Pancreas (tissue), 10 donors: ENCODE measurements at regions of chr7 and their contacts with region 1.

Region 1: DNA sequence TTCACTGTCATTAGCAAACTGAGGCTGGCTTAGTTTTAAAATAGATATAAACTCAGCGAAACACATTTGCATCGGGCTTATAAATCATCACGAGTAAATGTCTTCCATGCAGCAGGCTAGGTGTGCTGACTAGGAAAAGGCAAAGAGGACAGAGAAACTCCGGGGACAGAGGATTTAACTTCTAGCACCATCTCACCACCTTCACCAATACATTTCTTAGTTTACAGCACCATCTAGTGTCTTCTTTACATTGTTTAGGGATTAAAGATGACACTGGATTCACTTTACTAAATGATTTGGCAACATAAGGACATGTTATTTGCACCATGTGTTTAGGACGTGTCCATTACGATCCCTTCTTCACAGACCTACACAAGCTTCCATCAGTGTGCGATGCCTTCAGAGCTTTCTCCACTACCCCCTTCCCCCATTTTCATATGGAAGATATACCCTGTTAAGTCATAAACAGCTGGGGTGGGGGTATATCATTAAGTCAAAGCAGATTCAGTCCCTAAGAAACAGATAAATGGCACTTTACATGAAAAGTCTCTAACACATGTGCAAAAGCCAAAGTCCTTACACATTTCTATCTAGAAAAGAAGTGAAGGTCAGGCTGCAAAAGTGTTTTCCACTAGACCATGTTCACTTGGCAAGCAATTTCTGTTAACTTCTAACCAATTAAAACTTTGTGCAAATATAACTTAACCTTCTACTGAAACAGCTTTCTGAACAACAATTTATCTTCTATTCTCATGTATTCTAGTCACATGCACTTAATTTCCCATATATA is 103.3 kb downstream of the GRB10 start:
- DNase-seq: no peak
- ATAC-seq: peak; percentile 15 to 43 (median 39)
- H3K4me3 ChIP-seq: no peak overlapping the region
- H3K27ac ChIP-seq: peak overlapping the region in 3 of 4 donors; percentile 8 to 60 (median 53)
- H3K4me1 ChIP-seq: peaks cover 42 to 81% (median 56%) of the 10 kb centered on the region in 3 donors
- H3K27me3 ChIP-seq: no peaks in the 10 kb centered on the region
- CTCF ChIP-seq: peak in 1 of 4 donors; percentile 10

Region 2: GRCh38 chr7:50101873-50102272 is 577.5 kb before region 1 on chr7:
- intact Hi-C with region 1: no loop called
- DNase-seq: no peak
- ATAC-seq: no peak
- H3K4me3 ChIP-seq: no peak overlapping the region
- H3K27ac ChIP-seq: no peak overlapping the region
- H3K4me1 ChIP-seq: no peaks in the 10 kb centered on the region
- H3K27me3 ChIP-seq: peaks cover 0 to 20% (median 0%) of the 10 kb centered on the region in 4 donors
- CTCF ChIP-seq: no peak

Region 3: GRCh38 chr7:50793115-50793946 is 113.9 kb after region 1 on chr7:
- intact Hi-C with region 1: loop called in 1 of 3 experiments (anchors 10 kb)
- DNase-seq: peak; percentile 77 to 90 (median 85)
- ATAC-seq: peak; percentile 71 to 82 (median 78)
- H3K4me3 ChIP-seq: peak overlapping the region; percentile 49 to 79 (median 71)
- H3K27ac ChIP-seq: peak overlapping the region; percentile 65 to 88 (median 83)
- H3K4me1 ChIP-seq: peaks cover 5 to 23% (median 14%) of the 10 kb centered on the region in 3 donors
- H3K27me3 ChIP-seq: no peaks in the 10 kb centered on the region
- CTCF ChIP-seq: no peak